Testis (tissue), 5 donors: ENCODE measurements at regions of chr3 and their contacts with region 1.

Region 1: GRCh38 chr3:197002701-197003454 is 26.7 kb downstream of the MELTF start:
- DNase-seq: peak; percentile 60
- H3K4me3 ChIP-seq: peak overlapping the region; percentile 65 to 67
- H3K27ac ChIP-seq: peak overlapping the region; percentile 40 to 91
- H3K4me1 ChIP-seq: peaks cover 4% of the 10 kb centered on the region
- H3K27me3 ChIP-seq: no peaks in the 10 kb centered on the region
- CTCF ChIP-seq: peak; percentile 63 to 74 (median 64)
- POLR2A ChIP-seq: no peak

Region 2: DNA sequence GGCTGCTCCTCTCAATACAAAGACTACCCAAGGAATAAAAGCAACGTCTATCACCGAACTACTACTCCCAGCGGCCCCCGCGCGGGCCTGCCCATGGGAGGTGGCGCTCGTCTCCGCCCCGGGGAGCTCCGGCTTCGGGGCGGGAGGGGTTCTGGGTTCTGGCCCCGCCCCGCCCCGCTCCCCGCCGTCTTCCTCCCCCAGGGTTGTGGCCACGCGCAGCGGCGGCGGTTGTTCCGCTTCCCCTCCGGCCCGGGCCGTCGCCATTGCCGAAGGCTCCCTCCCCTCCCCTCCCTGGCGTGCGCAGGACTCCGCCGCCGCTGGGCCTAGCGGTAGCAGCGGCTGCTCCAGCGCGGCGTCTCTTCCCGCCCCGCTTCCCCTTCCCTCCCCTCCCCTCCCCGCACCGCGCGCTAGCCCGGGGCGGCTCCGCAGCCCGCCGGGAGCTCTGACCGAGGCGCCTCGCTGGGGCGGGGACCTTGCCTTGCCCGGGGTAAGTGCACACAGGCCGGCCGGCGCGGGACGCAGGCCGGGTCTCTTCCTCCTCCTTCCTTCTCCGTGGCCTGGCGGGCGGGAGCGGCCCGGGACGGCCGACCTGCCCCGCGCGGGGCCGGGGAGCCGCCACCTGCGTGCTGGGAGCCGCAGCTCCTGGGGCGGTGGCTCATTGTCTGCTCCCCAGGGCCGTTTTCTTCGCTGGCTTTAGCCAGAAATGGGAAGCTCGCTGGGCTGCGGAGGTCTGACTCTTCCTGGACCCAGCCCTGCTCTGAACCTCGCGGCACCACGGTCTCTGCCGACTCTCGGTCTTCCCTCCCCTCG is 263.0 kb before region 1 on chr3 and contains the start of gene PAK2:
- intact Hi-C with region 1: no loop called
- DNase-seq: peak; percentile 95
- H3K4me3 ChIP-seq: peak within 1 kb of the TSS; percentile 81 to 99
- H3K27ac ChIP-seq: peak within 1 kb of the TSS; percentile 97 to 99
- H3K4me1 ChIP-seq: peaks cover 6% of the 10 kb centered on the region
- H3K27me3 ChIP-seq: no peaks in the 10 kb centered on the region
- CTCF ChIP-seq: no peak
- POLR2A ChIP-seq: no peak
- total RNA-seq, gene PAK2: 47.4 to 49.2 TPM

Region 3: GRCh38 chr3:196763179-196763822 is 239.6 kb before region 1 on chr3:
- intact Hi-C with region 1: no loop called
- DNase-seq: no peak
- H3K4me3 ChIP-seq: no peak overlapping the region
- H3K27ac ChIP-seq: no peak overlapping the region
- H3K4me1 ChIP-seq: no peaks in the 10 kb centered on the region
- H3K27me3 ChIP-seq: no peaks in the 10 kb centered on the region
- CTCF ChIP-seq: no peak
- POLR2A ChIP-seq: no peak

Region 4: DNA sequence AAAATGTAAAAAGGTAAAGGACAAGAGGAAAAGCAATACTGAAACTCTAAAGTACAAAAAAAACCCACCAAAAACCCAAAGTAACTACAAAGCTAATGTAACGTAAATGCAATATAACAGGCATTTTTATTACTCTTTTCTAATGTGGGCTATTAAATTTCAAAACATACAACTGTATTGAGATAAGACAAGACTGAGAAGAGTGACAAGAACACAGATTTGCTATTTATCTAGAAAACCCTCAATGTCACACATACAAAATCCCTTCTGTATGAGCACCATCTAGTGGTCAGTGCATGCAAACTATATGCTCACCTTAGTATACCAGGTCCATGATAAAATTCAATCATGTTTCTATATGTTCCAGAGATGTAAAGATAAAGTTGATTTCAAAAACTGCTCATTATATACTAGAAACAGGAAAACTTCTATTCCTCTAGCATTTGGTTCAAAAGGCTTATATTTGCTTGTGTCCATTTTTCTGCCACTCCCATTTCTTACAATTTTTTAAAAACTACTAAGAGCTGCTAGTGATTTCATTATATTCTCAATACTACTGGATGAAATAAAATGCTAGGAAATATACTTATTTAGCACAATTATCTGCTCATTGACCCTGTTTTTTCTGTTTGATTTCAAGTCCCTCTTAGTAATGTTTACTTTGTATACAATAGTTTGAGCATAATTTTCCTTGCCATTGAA is 184.2 kb after region 1 on chr3:
- intact Hi-C with region 1: loop called (anchors 10 kb)
- DNase-seq: no peak
- H3K4me3 ChIP-seq: no peak overlapping the region
- H3K27ac ChIP-seq: no peak overlapping the region
- H3K4me1 ChIP-seq: no peaks in the 10 kb centered on the region
- H3K27me3 ChIP-seq: no peaks in the 10 kb centered on the region
- CTCF ChIP-seq: peak; percentile 50 to 75 (median 72)
- POLR2A ChIP-seq: no peak